Activated CD4-positive, alpha-beta T cell treated with anti-CD3 and anti-CD28 coated beads for 36 hours (primary cell): ENCODE measurements at regions of chr1 and their contacts with region 1.

Region 1: GRCh38 chr1:160519642-160520435 is 3.2 kb downstream of the SLAMF6 start:
- DNase-seq: peak; percentile 54
- ATAC-seq: peak; percentile 70
- H3K4me3 Mint-ChIP-seq: peak overlapping the region; percentile 97
- H3K27ac Mint-ChIP-seq: peak overlapping the region; percentile 98
- H3K4me1 Mint-ChIP-seq: peaks cover 83% of the 10 kb centered on the region
- H3K27me3 Mint-ChIP-seq: no peaks in the 10 kb centered on the region

Region 2: DNA sequence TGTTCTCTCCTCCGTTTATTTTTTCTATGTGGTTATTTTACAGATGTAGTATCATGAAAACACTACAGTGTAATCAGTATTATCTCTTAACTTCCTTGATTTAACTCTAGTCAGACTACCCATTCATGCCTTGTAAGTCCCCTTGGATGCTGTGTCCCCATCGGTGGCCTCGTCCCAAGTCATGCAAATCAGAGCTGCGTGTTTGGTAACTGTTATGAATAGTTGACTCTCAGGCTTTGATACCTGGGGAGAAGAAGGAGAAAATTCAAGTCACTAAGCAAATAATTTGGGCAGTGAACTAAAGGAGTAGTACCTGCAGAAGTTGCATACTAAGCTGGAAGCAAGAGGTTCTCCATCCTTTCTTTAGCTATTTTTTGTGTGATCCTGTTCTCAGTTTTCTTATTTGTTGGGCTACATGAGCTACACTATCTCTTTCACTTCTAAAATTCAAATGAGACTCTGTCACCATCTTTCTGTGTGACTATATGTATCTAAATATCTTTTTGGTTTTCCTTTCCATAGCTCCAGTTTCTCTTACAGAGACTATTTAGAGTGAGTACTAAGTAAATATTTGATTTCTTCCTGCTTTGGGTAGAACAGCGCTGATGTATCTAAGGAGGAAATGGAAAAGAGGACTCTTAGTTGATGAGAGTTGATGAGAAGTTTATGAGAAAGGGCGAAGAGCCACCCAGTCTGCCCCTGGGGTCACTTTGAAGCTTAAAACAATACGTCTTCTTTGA is 68.5 kb before region 1 on chr1:
- CTCF ChIA-PET with region 1: interaction called, 5 read pairs
- POLR2A ChIA-PET with region 1: interaction called, 5 read pairs
- intact Hi-C with region 1: loop called (anchors 1 to 2 kb)
- DNase-seq: no peak
- ATAC-seq: peak; percentile 33
- H3K4me3 Mint-ChIP-seq: peak overlapping the region; percentile 48
- H3K27ac Mint-ChIP-seq: peak overlapping the region; percentile 95
- H3K4me1 Mint-ChIP-seq: peaks cover 82% of the 10 kb centered on the region
- H3K27me3 Mint-ChIP-seq: no peaks in the 10 kb centered on the region

Region 3: GRCh38 chr1:160474392-160475242 is 45.2 kb before region 1 on chr1:
- CTCF ChIA-PET with region 1: interaction called, 4 read pairs
- POLR2A ChIA-PET with region 1: interaction called, 4 read pairs
- intact Hi-C with region 1: loop called in 1 of 2 experiments (anchors 1 kb)
- DNase-seq: no peak
- ATAC-seq: peak; percentile 93
- H3K4me3 Mint-ChIP-seq: no peak overlapping the region
- H3K27ac Mint-ChIP-seq: no peak overlapping the region
- H3K4me1 Mint-ChIP-seq: peaks cover 6% of the 10 kb centered on the region
- H3K27me3 Mint-ChIP-seq: no peaks in the 10 kb centered on the region

Region 4: GRCh38 chr1:160567858-160568682 is 48.2 kb after region 1 on chr1:
- CTCF ChIA-PET with region 1: no interaction called
- POLR2A ChIA-PET with region 1: no interaction called
- intact Hi-C with region 1: loop called in 1 of 2 experiments (anchors 2 kb)
- DNase-seq: peak; percentile 79
- ATAC-seq: peak; percentile 95
- H3K4me3 Mint-ChIP-seq: peak overlapping the region; percentile 60
- H3K27ac Mint-ChIP-seq: peak overlapping the region; percentile 96
- H3K4me1 Mint-ChIP-seq: peaks cover 89% of the 10 kb centered on the region
- H3K27me3 Mint-ChIP-seq: no peaks in the 10 kb centered on the region

Region 5: GRCh38 chr1:160795951-160796383 is 276.1 kb after region 1 on chr1 and contains the start of gene LY9:
- CTCF ChIA-PET with region 1: no interaction called
- POLR2A ChIA-PET with region 1: no interaction called
- intact Hi-C with region 1: loop called in 1 of 2 experiments (anchors 5 kb)
- DNase-seq: peak; percentile 89
- ATAC-seq: peak; percentile 79
- H3K4me3 Mint-ChIP-seq: peak within 1 kb of the TSS; percentile 78
- H3K27ac Mint-ChIP-seq: peak within 1 kb of the TSS; percentile 95
- H3K4me1 Mint-ChIP-seq: peaks cover 61% of the 10 kb centered on the region
- H3K27me3 Mint-ChIP-seq: no peaks in the 10 kb centered on the region
- total RNA-seq, gene LY9: 10.0 to 11.0 TPM